Activated CD4-positive, alpha-beta memory T cell treated with anti-CD3 and anti-CD28 coated beads for 36 hours (primary cell): ENCODE measurements at regions of chr15 and their contacts with region 1.

Region 1: GRCh38 chr15:70488002-70488605 is 275.3 kb downstream of the UACA start:
- DNase-seq: peak; percentile 84
- H3K4me3 Mint-ChIP-seq: peak overlapping the region; percentile 8
- H3K27ac Mint-ChIP-seq: peak overlapping the region; percentile 36
- H3K4me1 Mint-ChIP-seq: peaks cover 59% of the 10 kb centered on the region
- H3K27me3 Mint-ChIP-seq: peaks cover 39% of the 10 kb centered on the region

Region 2: DNA sequence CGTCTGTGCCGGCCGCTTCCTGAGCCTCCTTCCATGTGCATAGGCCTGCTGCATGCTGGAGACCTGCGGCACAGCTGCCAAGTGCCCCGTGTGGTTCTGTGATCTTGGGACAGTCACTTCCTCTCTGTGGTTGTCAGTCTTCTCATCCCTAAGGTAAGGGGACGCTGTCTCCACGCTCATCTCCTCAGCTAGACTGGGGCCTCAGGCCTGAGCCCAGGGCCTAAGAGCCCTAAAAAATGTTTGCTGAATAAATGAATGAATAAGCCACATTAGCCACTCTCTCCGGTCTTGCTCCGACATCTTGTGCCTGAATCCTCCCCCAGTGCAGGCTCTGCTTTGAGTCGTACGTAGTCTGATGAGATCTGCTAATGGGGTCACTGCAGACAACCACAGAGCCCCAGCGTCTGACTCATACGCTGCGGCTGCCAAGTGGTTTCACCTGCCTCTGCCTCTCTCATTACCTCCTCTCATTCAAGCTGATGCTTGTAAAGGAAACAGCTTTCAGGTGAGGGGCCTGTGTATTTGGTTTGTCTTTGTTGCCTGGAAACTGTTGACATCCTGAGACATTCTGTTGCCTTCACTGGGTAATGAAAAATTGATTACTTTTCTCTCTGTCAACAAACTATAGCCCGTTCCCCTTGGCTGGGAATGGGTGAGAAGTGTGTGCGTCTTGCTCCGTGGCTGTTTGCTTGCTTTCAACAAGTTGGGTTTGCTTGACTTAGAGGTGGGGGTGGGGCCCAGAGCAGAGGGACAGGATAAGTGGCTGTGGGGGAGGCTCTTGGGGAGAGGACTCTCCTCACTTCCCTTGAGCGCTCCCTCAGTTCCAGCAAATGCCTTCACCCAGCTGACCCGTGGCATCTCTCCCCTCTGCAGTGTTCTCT is 1019.6 kb before region 1 on chr15:
- CTCF ChIA-PET with region 1: no interaction called
- POLR2A ChIA-PET with region 1: interaction called, 5 read pairs
- intact Hi-C with region 1: loop called (anchors 1 kb)
- DNase-seq: peak; percentile 92
- H3K4me3 Mint-ChIP-seq: peak overlapping the region; percentile 30
- H3K27ac Mint-ChIP-seq: peak overlapping the region; percentile 83
- H3K4me1 Mint-ChIP-seq: peaks cover 38% of the 10 kb centered on the region
- H3K27me3 Mint-ChIP-seq: no peaks in the 10 kb centered on the region

Region 3: GRCh38 chr15:69713726-69714559 is 774.2 kb before region 1 on chr15:
- CTCF ChIA-PET with region 1: interaction called, 3 read pairs
- POLR2A ChIA-PET with region 1: no interaction called
- intact Hi-C with region 1: loop called (anchors 2 kb)
- DNase-seq: peak; percentile 89
- H3K4me3 Mint-ChIP-seq: peak overlapping the region; percentile 5
- H3K27ac Mint-ChIP-seq: peak overlapping the region; percentile 72
- H3K4me1 Mint-ChIP-seq: peaks cover 61% of the 10 kb centered on the region
- H3K27me3 Mint-ChIP-seq: peaks cover 3% of the 10 kb centered on the region

Region 4: GRCh38 chr15:70140543-70141375 is 347.3 kb before region 1 on chr15:
- CTCF ChIA-PET with region 1: interaction called, 4 read pairs
- POLR2A ChIA-PET with region 1: no interaction called
- intact Hi-C with region 1: loop called (anchors 5 kb)
- DNase-seq: peak; percentile 61
- H3K4me3 Mint-ChIP-seq: peak overlapping the region; percentile 7
- H3K27ac Mint-ChIP-seq: peak overlapping the region; percentile 38
- H3K4me1 Mint-ChIP-seq: peaks cover 34% of the 10 kb centered on the region
- H3K27me3 Mint-ChIP-seq: peaks cover 15% of the 10 kb centered on the region

Region 5: GRCh38 chr15:70459312-70459875 is 28.7 kb before region 1 on chr15:
- CTCF ChIA-PET with region 1: interaction called, 10 read pairs
- POLR2A ChIA-PET with region 1: interaction called, 3 read pairs
- intact Hi-C with region 1: no loop called
- DNase-seq: no peak
- H3K4me3 Mint-ChIP-seq: no peak overlapping the region
- H3K27ac Mint-ChIP-seq: no peak overlapping the region
- H3K4me1 Mint-ChIP-seq: peaks cover 16% of the 10 kb centered on the region
- H3K27me3 Mint-ChIP-seq: peaks cover 20% of the 10 kb centered on the region

Region 6: GRCh38 chr15:70512772-70513362 is 24.8 kb after region 1 on chr15:
- CTCF ChIA-PET with region 1: interaction called, 81 read pairs
- POLR2A ChIA-PET with region 1: interaction called, 4 read pairs
- intact Hi-C with region 1: no loop called
- DNase-seq: peak; percentile 86
- H3K4me3 Mint-ChIP-seq: no peak overlapping the region
- H3K27ac Mint-ChIP-seq: no peak overlapping the region
- H3K4me1 Mint-ChIP-seq: peaks cover 21% of the 10 kb centered on the region
- H3K27me3 Mint-ChIP-seq: peaks cover 5% of the 10 kb centered on the region